Activated CD4-positive, alpha-beta memory T cell treated with anti-CD3 and anti-CD28 coated beads for 36 hours (primary cell): ENCODE measurements at regions of chr20 and their contacts with region 1.

Region 1: DNA sequence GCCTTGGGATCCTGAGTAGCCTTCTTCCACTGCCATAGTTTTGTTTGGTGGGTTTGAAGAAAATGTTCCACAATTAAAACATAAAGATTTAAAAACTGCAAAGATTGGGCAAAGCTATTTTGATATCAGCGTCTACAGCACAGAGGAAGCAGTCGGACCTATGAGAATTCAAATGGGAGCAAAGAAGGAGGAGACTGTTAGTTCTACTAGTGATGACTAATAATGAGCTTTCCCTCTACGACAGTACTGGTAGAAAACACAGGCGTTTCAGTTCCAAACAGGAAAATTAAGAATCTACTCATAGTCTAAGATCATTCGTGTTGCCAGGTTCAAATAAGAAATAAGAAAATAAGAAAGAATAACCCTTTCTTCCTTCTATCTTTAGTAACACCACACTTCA is 121.2 kb downstream of the INSM1 start:
- DNase-seq: no peak
- H3K4me3 Mint-ChIP-seq: peak overlapping the region; percentile 69
- H3K27ac Mint-ChIP-seq: peak overlapping the region; percentile 85
- H3K4me1 Mint-ChIP-seq: peaks cover 65% of the 10 kb centered on the region
- H3K27me3 Mint-ChIP-seq: no peaks in the 10 kb centered on the region

Region 2: DNA sequence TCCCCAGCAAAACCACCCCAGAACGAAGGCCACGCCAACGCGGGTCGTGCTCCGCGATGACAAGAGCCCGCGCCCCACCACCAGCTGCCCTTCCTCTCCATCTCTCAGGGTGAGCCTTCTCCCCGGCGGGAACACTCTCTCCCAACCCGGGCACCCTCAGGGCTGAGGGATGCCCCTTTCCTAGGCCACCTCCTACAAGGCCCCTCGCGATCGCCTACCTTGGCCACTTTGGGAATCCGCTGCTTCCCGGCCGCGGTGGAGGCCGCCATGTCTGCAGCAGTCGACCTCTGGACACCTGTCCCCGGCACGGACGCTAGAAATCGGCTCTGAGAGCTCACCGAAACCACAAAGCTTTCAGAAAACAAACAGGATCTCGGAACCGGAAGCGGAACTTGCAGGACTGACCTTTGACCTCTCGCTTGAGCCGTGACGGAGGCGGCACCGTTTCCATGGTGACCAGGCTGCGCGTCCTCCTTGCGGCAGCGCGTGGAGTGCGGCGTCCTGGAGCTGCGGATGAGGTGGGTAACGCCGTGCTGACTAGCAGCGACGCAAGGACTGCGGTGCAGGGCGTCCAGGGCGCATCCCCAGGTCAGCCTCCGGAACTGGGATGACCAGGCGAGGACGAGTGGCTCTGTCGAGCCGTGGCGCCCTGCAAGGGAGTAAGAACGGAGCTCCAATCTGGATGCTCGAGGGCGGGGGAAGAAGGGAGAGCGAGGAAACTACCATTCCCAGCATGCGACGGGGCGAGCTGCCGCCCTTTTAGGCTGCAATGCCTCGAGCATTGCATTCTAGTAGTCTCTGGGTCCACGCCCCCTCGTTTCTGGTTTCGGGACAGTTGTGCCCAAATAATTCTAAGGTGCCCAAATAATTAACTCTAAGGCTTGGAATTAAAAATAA is 436.7 kb before region 1 on chr20 and contains the starts of genes CFAP61 and CRNKL1:
- CTCF ChIA-PET with region 1: no interaction called
- POLR2A ChIA-PET with region 1: no interaction called
- intact Hi-C with region 1: loop called (anchors 5 kb)
- DNase-seq: peak; percentile 98
- H3K4me3 Mint-ChIP-seq: peak within 1 kb of the TSS; percentile 99
- H3K27ac Mint-ChIP-seq: peak within 1 kb of the TSS; percentile 96
- H3K4me1 Mint-ChIP-seq: peaks cover 24% of the 10 kb centered on the region
- H3K27me3 Mint-ChIP-seq: peaks cover 8% of the 10 kb centered on the region
- total RNA-seq, gene CFAP61: not detected
- total RNA-seq, gene CRNKL1: 21.5 to 21.8 TPM

Region 3: GRCh38 chr20:20184149-20184548 is 304.9 kb before region 1 on chr20:
- CTCF ChIA-PET with region 1: no interaction called
- POLR2A ChIA-PET with region 1: no interaction called
- intact Hi-C with region 1: no loop called
- DNase-seq: peak; percentile 17
- H3K4me3 Mint-ChIP-seq: no peak overlapping the region
- H3K27ac Mint-ChIP-seq: no peak overlapping the region
- H3K4me1 Mint-ChIP-seq: no peaks in the 10 kb centered on the region
- H3K27me3 Mint-ChIP-seq: peaks cover 6% of the 10 kb centered on the region

Region 4: DNA sequence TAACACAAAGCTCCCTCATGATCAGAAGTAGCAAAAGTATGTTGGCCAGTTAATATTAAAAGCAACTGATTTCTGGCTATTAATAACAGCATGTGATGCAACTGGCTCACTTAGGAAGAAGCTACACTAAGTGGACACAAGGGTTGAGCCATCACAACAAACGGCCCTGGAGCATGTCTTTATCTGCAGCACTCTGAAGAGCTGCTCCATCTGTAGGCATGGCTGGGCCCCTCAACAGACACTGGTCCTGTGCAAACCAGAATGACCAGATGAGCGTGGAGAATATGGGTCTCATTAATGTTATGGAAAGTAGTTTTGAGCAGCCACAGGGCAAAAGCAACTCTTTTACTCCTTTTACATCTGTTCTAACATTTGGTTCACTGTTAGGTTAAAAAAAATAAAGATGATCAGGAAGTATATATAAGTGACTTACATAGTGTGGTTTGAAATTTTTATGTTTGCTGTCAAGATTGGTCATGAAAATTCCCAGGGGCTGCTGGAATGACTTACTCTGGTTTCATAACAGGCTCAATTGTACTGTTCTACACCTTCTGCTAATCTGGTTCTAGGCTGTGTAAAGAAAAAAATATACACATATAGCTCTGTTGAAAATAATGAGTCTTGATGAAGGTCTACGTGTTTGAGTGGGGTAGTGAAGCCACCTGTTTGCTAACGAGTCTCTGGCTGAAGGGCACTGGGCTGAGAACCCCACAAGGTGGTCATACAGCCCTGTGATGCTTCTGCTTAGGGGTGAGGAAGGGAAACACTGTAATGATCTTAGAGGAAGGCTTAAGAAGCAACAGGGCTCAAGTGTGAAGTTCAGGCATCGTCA is 63.0 kb before region 1 on chr20:
- CTCF ChIA-PET with region 1: no interaction called
- POLR2A ChIA-PET with region 1: no interaction called
- intact Hi-C with region 1: loop called (anchors 2 kb)
- DNase-seq: peak; percentile 32
- H3K4me3 Mint-ChIP-seq: no peak overlapping the region
- H3K27ac Mint-ChIP-seq: peak overlapping the region; percentile 85
- H3K4me1 Mint-ChIP-seq: peaks cover 42% of the 10 kb centered on the region
- H3K27me3 Mint-ChIP-seq: no peaks in the 10 kb centered on the region

Region 5: DNA sequence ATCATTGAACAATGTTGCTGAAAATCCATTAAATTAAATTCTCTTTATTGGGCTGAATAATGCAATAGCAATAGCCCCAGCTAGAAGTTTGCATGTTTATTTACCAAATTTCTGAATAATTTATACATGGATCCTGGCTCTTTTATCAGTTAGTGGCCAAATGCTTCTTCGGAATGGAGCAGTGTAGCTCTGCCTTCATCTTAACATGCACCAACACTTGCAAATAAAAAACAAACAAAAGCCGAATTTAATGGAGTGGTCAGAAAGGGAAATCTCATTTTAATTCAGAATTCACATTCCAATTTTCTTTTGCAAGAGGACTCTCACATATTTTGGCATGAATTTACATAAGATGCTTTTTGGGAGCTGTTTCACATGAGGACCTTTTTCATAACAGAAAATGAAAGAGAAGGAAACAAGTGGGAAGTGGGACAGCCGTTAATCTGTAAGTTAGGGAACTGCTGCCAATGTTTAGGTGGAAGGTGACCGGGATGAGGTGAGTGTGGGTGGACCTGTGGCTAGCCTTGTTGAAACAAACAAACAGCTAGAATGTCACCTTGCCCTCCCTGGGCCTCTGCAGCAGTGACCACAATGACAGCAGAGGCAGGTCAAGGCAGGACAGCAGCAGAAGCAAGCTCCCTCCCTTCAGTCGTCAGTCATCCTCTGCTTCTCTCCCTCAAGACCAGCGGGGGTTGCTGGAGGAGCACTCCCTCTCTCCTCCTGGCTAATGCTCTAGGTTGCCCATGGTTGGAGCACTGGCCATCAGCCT is 48.0 kb before region 1 on chr20:
- CTCF ChIA-PET with region 1: no interaction called
- POLR2A ChIA-PET with region 1: no interaction called
- intact Hi-C with region 1: no loop called
- DNase-seq: no peak
- H3K4me3 Mint-ChIP-seq: no peak overlapping the region
- H3K27ac Mint-ChIP-seq: no peak overlapping the region
- H3K4me1 Mint-ChIP-seq: no peaks in the 10 kb centered on the region
- H3K27me3 Mint-ChIP-seq: no peaks in the 10 kb centered on the region

Region 6: DNA sequence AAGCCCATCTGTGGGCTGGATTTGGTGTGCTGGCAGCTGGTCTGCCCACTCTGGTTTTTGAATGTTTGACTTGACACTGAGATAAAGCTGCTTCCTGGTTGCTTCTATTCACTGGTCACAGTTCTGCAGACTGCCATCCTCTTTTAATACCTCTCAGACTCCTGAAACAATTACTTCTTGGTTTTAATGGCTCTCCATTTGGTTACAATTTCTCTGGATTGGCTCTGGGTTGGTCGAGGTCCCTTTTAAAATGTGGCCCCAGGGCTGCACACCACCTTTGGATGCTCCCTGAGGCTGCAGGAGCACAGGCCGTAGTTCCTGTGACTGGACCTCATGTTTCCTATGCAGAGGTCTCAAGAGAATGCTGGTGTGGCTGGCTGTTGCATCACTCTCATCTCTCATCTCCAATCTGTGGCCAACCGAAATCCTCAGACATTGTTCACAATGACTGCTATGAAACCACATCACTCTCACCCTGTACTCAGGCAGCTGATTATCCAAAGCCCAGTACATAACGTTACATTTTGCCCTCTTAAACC is 22.6 kb before region 1 on chr20:
- CTCF ChIA-PET with region 1: no interaction called
- POLR2A ChIA-PET with region 1: interaction called, 4 read pairs
- intact Hi-C with region 1: loop called (anchors 1 kb)
- DNase-seq: peak; percentile 64
- H3K4me3 Mint-ChIP-seq: no peak overlapping the region
- H3K27ac Mint-ChIP-seq: peak overlapping the region; percentile 81
- H3K4me1 Mint-ChIP-seq: peaks cover 24% of the 10 kb centered on the region
- H3K27me3 Mint-ChIP-seq: no peaks in the 10 kb centered on the region

Region 7: DNA sequence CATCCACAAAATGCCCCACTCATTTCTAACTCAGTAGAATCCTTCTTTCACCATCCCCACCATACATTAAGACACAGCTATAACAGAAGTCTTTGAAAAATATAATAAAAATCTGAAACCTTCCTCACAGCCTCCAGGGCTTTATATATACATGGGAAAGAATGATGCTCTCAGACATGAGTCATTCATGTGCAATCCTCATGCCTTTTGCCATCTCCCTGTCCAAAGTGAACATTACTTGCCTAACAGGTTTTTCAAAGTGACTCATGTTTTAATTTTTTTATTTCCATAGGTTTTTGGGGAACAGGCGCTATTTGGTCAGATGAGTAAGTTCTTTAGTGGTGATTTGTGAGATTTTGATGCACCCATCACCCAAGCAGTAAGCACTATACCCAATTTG is 60.7 kb after region 1 on chr20:
- CTCF ChIA-PET with region 1: no interaction called
- POLR2A ChIA-PET with region 1: interaction called, 5 read pairs
- intact Hi-C with region 1: loop called (anchors 1 kb)
- DNase-seq: no peak
- H3K4me3 Mint-ChIP-seq: no peak overlapping the region
- H3K27ac Mint-ChIP-seq: no peak overlapping the region
- H3K4me1 Mint-ChIP-seq: peaks cover 39% of the 10 kb centered on the region
- H3K27me3 Mint-ChIP-seq: no peaks in the 10 kb centered on the region